ENCODE measurements at regions of chr22 and their contacts with region 1.

Region 1: DNA sequence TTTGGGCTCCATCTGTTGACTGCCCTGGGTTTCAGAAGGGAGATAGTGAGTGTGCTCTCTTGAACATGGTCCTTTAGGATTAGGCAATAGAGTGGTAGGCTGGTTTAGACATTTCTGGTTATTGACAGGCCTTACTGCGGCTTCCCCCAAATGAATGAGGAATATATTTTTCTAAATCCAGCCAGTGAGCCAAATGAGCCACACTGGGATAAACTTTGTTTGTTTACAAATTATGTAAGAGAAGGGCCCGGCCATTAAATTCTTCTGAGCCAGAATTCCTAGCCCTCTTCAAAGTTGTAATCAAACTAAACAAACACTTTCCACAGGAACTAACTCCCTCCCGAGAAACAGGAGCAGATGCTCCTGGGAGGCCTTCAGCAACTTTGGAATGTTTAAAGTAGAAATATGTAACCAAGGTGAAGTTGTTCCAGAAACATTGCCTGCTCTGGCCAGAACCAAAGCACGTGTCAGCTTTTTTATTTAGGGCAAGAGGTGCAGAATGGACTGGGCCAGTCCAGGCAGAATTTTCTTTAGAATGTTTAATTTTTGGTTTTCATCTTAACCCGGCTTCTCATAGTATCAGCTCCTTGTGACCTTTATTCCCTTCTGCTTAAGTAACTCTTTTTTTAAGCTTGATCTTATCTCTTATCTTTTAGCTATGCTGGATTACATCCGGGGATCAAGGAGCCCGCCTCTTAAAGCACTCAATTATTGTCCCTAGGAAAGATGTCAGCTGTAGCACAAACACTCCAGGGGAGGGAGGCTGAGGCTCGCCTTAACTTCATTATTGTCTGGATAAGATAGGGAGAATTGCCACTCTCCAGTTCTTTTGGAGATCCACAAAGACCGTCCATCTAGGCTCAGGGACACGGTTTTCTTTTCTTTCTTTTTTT is 28.7 kb downstream of the ZNRF3 start:
- DNase-seq: no peak
- ATAC-seq: no peak
- H3K4me3 ChIP-seq: no peak overlapping the region
- H3K27ac ChIP-seq: no peak overlapping the region
- H3K4me1 ChIP-seq: peaks cover 22% of the 10 kb centered on the region
- H3K27me3 ChIP-seq: no peaks in the 10 kb centered on the region; a peak in 1 of 4 replicates
- CTCF ChIP-seq: no peak
- EP300 ChIP-seq: no peak
- POLR2A ChIP-seq: no peak
- RAD21 ChIP-seq: no peak

Region 2: DNA sequence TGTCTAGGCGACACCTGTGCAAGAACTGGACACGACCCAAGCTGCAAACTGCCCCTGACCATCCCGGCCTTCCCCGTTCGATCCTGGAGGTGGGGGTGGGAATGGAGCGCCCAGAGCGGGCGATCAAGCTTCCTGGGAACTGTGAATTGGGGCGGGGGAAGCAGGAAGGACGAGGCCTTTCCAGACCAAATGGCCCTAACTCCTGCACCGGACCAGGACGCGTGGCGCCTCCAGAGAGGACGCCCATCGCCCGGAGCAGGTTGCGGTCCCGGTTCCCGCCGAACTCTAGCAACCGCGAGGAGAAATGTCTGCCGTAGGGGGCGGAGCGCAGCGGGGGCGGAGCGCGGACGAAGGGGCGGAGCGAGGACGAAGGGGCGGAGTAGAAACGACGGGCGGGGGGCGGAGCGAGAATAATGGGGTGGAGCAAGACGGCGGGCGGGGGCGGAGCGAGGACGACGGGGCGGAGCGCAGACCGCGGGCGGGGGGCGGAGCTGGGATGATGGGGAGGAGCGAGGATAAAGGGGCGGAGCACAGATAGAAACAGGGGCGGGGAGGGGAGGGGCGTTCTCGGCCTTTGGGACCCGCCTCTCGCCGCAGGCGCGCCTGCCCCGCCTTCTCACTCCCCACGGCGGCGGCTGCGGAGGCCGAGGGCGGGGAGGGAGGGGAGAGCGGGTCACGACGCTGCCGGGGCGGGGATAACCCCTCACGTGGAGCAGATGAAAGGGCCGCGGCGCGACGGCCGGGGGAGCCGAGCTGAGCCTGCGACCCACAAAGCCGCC is 29.0 kb before region 1 on chr22 and contains the start of gene ZNRF3:
- CTCF ChIA-PET with region 1: interaction called, 5 read pairs
- POLR2A ChIA-PET with region 1: interaction called, 3 read pairs
- RAD21 ChIA-PET with region 1: interaction called, 65 read pairs
- SMC1A ChIA-PET with region 1: interaction called, 48 read pairs
- in situ Hi-C with region 1: no loop called
- intact Hi-C with region 1: loop called (anchors 1 kb)
- DNase-seq: no peak
- ATAC-seq: peak; percentile 89
- H3K4me3 ChIP-seq: peak within 1 kb of the TSS; percentile 57; the same call in 1 of the 2 replicates
- H3K27ac ChIP-seq: no peak within 1 kb of the TSS
- H3K4me1 ChIP-seq: no peaks in the 10 kb centered on the region
- H3K27me3 ChIP-seq: peaks cover 0 to 5% of the 10 kb centered on the region in 2 experiments; a peak in 1 of 4 replicates
- CTCF ChIP-seq: no peak
- EP300 ChIP-seq: no peak
- POLR2A ChIP-seq: peak; percentile 50; the same call in 1 of the 2 replicates
- RAD21 ChIP-seq: no peak
- polyA plus RNA-seq, gene ZNRF3: 0.10 to 0.13 TPM

Region 3: DNA sequence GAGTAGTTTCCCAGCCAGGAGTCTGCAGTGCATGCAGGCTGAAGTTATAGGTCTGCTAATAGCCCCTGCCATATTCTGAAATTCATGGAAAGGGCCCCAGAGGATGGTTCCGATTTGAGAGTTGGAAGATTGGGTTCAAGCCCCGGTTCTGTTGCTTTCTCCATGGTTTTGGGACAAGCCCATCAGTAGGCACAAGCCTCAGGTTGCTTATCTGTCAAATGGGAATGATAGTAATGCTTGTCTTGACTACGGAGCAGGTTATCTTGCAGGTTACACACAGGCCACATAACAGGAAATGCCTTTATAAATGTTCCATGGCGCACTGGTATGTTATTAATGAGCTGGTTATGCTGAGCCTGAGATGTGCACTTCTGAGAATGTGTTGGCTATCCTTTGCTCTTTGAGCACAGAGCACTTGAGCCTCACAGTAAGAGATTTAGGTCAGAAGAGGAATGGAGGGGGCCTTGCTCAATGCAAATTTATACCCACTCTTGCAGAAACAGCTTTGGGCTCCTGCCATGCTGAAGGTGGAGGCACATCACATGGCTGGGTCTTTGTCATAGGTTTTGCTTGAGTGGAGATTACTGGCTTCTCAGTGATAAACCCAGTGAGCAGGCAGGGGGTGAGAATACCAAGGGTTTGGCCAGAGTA is 18.5 kb after region 1 on chr22:
- CTCF ChIA-PET with region 1: interaction called, 42 read pairs
- POLR2A ChIA-PET with region 1: interaction called, 6 read pairs
- RAD21 ChIA-PET with region 1: interaction called, 64 read pairs
- SMC1A ChIA-PET with region 1: interaction called, 33 read pairs
- in situ Hi-C with region 1: no loop called
- intact Hi-C with region 1: no loop called
- DNase-seq: no peak
- ATAC-seq: peak; percentile 84
- H3K4me3 ChIP-seq: no peak overlapping the region
- H3K27ac ChIP-seq: no peak overlapping the region
- H3K4me1 ChIP-seq: no peaks in the 10 kb centered on the region; the same call in 1 of the 2 replicates
- H3K27me3 ChIP-seq: peaks cover 0 to 6% of the 10 kb centered on the region in 2 experiments; a peak in 1 of 4 replicates
- CTCF ChIP-seq: no peak
- EP300 ChIP-seq: no peak
- POLR2A ChIP-seq: no peak
- RAD21 ChIP-seq: no peak

Region 4: DNA sequence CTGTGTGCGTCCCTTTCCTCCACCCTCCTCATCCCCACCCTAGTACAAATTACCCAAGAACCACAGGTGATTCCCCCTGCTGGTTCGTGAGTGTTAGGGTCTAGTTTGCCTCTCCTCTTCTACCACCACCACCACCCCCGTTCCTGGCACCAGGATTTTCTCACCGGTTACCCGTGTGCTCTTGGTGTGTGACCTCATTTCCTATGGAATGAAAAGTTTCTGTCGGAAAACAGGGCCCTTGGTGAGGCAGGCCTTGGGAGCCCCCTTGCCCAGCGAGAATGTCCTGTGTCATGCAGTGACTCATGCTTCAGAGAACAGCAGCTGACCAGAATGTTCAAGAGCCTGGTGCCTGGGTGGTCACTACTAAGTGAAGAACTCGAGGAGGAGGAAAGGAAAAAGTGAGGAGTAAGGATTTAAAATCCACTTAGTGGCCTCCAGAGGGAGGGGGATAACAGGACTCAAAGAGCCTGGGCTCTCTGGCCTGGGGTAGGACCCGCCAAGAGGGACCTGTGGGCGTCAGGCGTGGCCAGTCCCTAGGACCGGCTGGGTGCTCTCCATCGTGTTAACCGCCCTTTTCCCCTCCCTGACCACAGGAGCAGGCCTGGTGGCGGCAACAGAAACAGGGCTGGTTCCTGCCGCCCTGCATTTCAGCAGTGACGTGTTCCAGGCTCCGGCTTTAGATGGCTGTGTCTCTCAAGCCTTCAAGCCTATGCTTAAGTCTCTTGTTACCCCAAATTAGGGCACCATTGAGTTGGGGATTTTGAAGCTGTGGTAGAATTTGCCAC is 119.4 kb after region 1 on chr22:
- CTCF ChIA-PET with region 1: interaction called, 87 read pairs
- POLR2A ChIA-PET with region 1: interaction called, 7 read pairs
- RAD21 ChIA-PET with region 1: interaction called, 84 read pairs
- SMC1A ChIA-PET with region 1: interaction called, 43 read pairs
- in situ Hi-C with region 1: no loop called
- intact Hi-C with region 1: loop called (anchors 5 kb)
- DNase-seq: no peak
- ATAC-seq: peak; percentile 69
- H3K4me3 ChIP-seq: no peak overlapping the region
- H3K27ac ChIP-seq: no peak overlapping the region
- H3K4me1 ChIP-seq: no peaks in the 10 kb centered on the region
- H3K27me3 ChIP-seq: 0 out of 4 replicates have a peak, but pooled peaks cover 0 to 6% of the 10 kb centered on the region in 2 experiments
- CTCF ChIP-seq: no peak
- EP300 ChIP-seq: no peak
- POLR2A ChIP-seq: no peak
- RAD21 ChIP-seq: no peak